ENCODE measurements at regions of chr13 and their contacts with region 1.

Region 1: GRCh38 chr13:42039946-42040729 is 8.3 kb upstream of the DGKH start:
- DNase-seq: peak; percentile 90 to 96 (median 93)
- H3K4me3 ChIP-seq: peak overlapping the region; percentile 24 to 85 (median 73)
- H3K27ac ChIP-seq: peak overlapping the region; percentile 55 to 98 (median 96)
- H3K4me1 ChIP-seq: peaks cover 0 to 13% of the 10 kb centered on the region in 2 donors
- H3K27me3 ChIP-seq: no peaks in the 10 kb centered on the region
- CTCF ChIP-seq: peak in 1 of 6 experiments; percentile 18
- POLR2A ChIP-seq: peak; percentile 82 to 93

Region 2: DNA sequence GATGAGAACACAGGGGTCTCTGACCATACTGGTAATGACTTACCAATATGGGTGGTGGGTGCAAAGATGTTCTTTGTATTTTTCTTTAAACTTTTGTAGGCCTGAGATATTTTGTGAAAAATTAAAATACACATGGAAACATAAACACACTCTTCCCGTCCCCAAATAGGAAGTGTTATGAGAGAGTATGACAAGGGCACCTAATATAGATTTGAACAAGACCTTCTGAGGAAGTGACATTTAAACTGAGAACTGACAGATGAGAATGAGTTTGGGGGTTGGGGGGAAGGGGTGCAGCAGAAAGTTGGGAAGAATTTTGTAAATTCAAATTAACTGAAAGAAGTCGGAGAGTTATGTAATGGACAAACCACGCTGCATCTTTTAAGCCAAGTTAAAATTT is 358.6 kb before region 1 on chr13:
- intact Hi-C with region 1: loop called in 1 of 2 experiments (anchors 10 kb)
- DNase-seq: no peak
- H3K4me3 ChIP-seq: no peak overlapping the region
- H3K27ac ChIP-seq: no peak overlapping the region
- H3K4me1 ChIP-seq: no peaks in the 10 kb centered on the region
- H3K27me3 ChIP-seq: no peaks in the 10 kb centered on the region
- CTCF ChIP-seq: no peak
- POLR2A ChIP-seq: no peak

Region 3: DNA sequence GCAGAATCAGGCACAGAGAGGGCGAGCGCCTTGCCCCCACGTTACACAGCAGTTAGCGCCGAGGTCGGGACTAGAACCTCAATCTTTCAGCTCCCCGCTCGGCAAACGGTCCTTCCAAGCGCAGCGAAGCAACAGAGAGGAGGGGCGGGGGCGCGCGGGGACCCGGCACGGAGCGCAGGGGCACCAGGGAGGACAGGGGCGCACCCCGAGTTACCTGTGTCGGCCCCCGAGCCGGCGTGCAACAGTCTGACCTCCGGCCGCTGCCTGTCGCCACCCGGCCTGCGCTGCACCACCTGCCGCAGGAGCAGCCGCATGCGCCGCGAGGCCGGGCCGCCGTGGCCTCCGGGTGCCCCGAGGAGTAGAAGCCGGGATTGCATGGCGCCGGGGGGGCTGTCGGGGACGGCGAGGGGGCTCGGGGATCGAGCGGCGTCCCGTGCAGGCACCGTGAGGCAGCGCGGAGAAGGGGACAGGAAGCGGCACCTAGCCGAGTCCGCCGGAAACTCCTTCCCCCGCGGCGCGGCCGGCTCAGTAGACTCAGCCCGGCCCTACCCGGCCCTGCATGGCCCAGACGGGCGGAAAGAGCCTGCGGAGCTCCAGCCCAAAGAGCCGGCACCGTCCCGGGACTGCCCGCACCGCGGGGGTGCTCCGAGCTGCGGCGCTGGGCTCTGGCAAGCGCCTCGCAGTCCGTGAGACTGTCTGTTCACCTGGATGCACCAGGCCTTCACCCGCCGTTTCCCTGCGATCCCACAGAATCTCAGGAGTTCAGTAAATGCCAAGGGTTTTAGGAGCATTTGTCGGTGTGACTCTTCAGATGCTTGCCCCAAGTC is 79.3 kb before region 1 on chr13 and contains the start of gene VWA8:
- intact Hi-C with region 1: loop called in 1 of 2 experiments (anchors 5 kb)
- DNase-seq: peak; percentile 80 to 90 (median 84)
- H3K4me3 ChIP-seq: peak within 1 kb of the TSS; percentile 70 to 94 (median 86)
- H3K27ac ChIP-seq: peak within 1 kb of the TSS; percentile 64 to 94 (median 91)
- H3K4me1 ChIP-seq: peaks cover 18 to 25% of the 10 kb centered on the region in 2 donors
- H3K27me3 ChIP-seq: no peaks in the 10 kb centered on the region
- CTCF ChIP-seq: no peak
- POLR2A ChIP-seq: peak; percentile 49 to 62
- total RNA-seq, gene VWA8: 18.5 to 45.4 (median 35.4) TPM

Region 4: DNA sequence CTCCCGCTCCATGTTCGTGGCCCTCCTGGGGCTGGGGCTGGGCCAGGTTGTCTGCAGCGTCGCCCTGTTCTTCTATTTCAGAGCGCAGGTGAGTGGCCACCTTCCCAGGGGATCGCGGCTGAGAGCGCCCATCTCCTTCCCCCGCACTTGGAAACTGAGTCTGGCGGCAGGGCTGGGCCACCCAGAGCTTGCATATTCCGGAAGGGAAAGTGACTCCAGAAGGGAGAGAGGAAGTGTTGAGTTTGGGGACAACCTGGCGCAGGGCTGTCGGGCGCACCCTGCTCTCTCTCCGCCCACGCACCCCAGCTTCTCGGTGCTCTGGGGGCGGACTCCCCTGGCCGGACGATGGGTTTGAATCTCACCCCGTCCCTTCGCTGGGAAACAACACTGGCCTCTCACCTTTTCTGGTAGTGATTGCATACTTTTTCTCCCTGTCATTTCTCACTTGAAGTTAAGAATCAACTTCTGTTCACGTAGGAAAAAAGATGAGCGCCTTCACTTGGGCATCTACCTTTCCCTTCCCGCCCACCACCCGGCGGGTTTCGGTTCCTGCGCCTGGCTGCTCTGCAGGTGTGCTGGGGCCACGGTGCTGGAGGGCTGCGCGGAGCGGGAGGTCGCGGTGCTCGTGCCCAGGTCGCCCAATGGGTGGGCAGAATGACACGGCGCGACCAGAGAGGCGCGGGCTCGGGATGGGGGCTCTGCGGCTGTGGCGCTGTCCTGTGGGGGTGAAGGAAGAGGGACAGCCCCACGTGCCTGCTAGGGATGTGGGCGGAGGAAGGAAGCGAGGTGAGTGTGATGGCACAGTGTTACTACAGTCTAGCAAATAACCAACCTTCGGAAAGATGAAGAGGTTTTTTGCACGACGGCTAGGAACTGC is 534.5 kb after region 1 on chr13:
- intact Hi-C with region 1: no loop called
- DNase-seq: no peak
- H3K4me3 ChIP-seq: peak overlapping the region in 1 of 4 donors; percentile 35
- H3K27ac ChIP-seq: no peak overlapping the region
- H3K4me1 ChIP-seq: peaks cover 4 to 7% of the 10 kb centered on the region in 2 donors
- H3K27me3 ChIP-seq: peaks cover 34% of the 10 kb centered on the region
- CTCF ChIP-seq: no peak
- POLR2A ChIP-seq: no peak

Measured in adrenal gland (tissue), 19 donors.